Left lung (tissue), 14 donors: ENCODE measurements at regions of chr1 and their contacts with region 1.

Region 1: GRCh38 chr1:115595279-115596079 is 46.3 kb upstream of the VANGL1 start:
- DNase-seq: peak; percentile 74 to 94 (median 83)
- ATAC-seq: peak; percentile 97
- H3K4me3 ChIP-seq: no peak overlapping the region
- H3K27ac ChIP-seq: no peak overlapping the region
- H3K4me1 ChIP-seq: no peaks in the 10 kb centered on the region
- H3K27me3 ChIP-seq: no peaks in the 10 kb centered on the region
- CTCF ChIP-seq: peak; percentile 82 to 87

Region 2: GRCh38 chr1:115123116-115123515 is 472.4 kb before region 1 on chr1:
- intact Hi-C with region 1: loop called in 1 of 2 experiments (anchors 5 kb)
- DNase-seq: no peak
- ATAC-seq: no peak
- H3K4me3 ChIP-seq: no peak overlapping the region
- H3K27ac ChIP-seq: no peak overlapping the region
- H3K4me1 ChIP-seq: peaks cover 0 to 3% of the 10 kb centered on the region in 2 donors
- H3K27me3 ChIP-seq: peaks cover 0 to 9% of the 10 kb centered on the region in 2 donors
- CTCF ChIP-seq: no peak

Region 3: GRCh38 chr1:115138968-115139367 is 456.5 kb before region 1 on chr1:
- intact Hi-C with region 1: loop called in 1 of 2 experiments (anchors 5 kb)
- DNase-seq: peak; percentile 80 to 94 (median 87)
- ATAC-seq: peak; percentile 99
- H3K4me3 ChIP-seq: no peak overlapping the region
- H3K27ac ChIP-seq: no peak overlapping the region
- H3K4me1 ChIP-seq: peaks cover 3 to 4% of the 10 kb centered on the region in 2 donors
- H3K27me3 ChIP-seq: peaks cover 0 to 9% of the 10 kb centered on the region in 2 donors
- CTCF ChIP-seq: peak; percentile 75 to 85

Region 4: GRCh38 chr1:115530431-115530876 is 65.0 kb before region 1 on chr1:
- intact Hi-C with region 1: no loop called
- DNase-seq: no peak
- ATAC-seq: no peak
- H3K4me3 ChIP-seq: no peak overlapping the region
- H3K27ac ChIP-seq: no peak overlapping the region
- H3K4me1 ChIP-seq: no peaks in the 10 kb centered on the region
- H3K27me3 ChIP-seq: no peaks in the 10 kb centered on the region
- CTCF ChIP-seq: no peak